Adrenal gland (tissue), 19 donors: ENCODE measurements at regions of chr2 and their contacts with region 1.

Region 1: DNA sequence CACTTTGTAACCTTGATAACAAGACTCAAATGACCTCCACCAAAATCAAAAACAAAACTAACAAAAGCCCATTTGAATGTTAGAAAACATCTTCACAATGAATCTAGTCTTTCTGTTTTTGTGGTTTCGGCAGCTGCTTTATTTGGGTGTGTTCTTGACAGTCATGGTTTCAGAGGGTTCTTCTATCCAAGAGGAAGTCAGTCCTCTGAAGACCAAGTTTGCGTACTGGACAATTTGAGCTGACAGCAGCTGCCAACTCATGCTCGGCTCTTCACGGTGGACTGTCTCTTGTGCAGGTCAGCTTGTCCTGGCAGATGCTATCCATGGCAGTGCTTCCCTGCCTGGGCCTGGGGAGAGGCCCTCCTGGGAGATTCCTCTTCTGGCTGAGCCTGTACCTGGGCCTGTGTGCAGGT is 91.0 kb downstream of the TMEM17 start:
- DNase-seq: peak in 2 of 7 donors; percentile 24 to 34
- H3K4me3 ChIP-seq: no peak overlapping the region
- H3K27ac ChIP-seq: no peak overlapping the region
- H3K4me1 ChIP-seq: peaks cover 14 to 28% of the 10 kb centered on the region in 2 donors
- H3K27me3 ChIP-seq: no peaks in the 10 kb centered on the region
- CTCF ChIP-seq: no peak
- POLR2A ChIP-seq: no peak

Region 2: DNA sequence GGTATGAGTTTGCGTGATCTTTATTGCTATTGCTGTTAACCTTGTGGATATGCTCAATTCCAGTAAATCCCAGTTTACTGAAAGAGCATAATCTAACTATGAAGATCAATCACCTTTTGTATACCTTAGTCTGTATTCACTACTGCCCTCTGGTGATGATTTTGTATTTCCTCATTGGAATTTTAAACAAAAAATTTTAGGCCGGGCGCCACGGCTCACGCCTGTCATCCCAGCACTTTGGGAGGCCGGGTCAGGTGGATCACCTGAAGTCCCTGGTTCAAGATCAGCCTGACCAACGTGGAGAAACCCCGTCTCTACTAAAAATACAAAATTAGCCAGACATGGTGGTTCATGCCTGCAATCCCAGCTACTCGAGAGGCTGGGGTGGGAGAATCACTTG is 504.4 kb before region 1 on chr2:
- intact Hi-C with region 1: loop called in 1 of 2 experiments (anchors 5 kb)
- DNase-seq: no peak
- H3K4me3 ChIP-seq: no peak overlapping the region
- H3K27ac ChIP-seq: no peak overlapping the region
- H3K4me1 ChIP-seq: peaks cover 10 to 21% of the 10 kb centered on the region in 2 donors
- H3K27me3 ChIP-seq: no peaks in the 10 kb centered on the region
- CTCF ChIP-seq: peak in 1 of 6 experiments; percentile 20
- POLR2A ChIP-seq: no peak

Region 3: DNA sequence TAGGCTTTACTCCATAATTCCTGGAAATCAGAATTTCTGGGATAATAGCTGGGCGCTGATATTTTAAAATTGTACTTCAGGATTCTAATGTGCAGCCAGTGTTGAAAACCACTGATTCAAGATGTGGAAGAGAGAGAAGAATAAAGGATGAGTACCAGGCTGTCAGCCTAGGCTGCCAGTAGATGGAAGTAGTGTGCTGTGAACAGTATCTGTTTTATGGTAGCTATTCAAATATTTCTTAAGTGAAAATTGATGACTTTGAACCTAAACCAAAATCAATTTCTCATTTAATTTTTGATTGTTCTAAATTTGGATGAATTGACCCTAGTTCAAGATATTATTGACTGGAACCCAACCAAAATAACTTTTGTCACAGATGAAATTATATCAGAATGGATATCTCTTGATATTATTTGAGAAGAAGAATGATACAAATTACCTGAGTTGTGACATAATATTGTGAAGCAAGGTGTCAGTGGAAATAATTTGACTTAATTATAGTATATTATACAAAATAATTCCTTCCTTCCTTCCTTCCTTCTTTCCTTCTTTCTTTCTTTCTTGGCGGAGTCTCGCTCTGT is 421.5 kb before region 1 on chr2:
- intact Hi-C with region 1: loop called (anchors 5 to 10 kb)
- DNase-seq: peak; percentile 26 to 66 (median 39)
- H3K4me3 ChIP-seq: no peak overlapping the region
- H3K27ac ChIP-seq: no peak overlapping the region
- H3K4me1 ChIP-seq: no peaks in the 10 kb centered on the region
- H3K27me3 ChIP-seq: no peaks in the 10 kb centered on the region
- CTCF ChIP-seq: peak; percentile 51 to 81 (median 74)
- POLR2A ChIP-seq: no peak

Region 4: DNA sequence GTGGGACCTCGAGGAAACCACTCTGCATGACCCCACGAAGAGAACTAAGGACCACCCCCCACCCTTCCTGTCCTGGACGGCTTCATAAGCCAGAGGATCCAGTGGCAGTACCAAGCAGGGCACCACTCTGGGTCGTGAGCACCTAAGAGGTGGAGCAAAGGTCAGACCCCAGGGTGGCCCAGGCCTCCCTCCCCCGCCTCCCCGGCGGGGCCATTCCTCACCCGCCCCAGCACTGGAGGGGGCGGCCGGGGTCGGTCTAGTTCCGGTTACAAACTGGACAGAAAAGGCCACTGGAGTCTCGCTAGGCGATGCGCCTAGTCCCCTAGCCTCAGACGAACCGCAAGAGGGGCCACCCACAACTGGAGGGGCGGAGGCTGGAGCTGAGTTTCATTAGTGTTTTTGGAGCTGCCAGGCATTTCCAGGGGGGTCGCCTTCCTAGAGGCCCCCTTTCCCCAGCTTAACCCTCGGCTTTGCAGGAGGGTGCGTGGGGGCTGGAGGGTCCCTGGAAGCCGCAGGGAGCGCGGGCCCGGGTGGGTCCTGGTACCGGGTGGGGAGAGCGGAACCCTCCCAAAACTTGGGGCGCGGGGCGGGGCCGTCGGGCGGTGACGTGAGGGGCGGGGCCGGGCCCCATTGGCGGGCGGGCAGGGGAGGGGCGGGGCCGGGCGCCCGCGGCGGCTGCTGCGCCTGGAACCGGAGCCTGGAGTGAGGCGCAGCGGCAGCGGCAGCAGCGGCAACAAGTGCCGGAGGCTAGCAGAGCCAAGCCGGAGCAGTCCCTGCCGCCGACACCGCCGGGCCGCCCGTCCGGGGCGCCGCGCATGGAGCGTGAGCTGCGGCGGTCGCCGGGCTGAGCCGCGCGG is 219.4 kb before region 1 on chr2 and contains the start of gene B3GNT2:
- intact Hi-C with region 1: loop called in 1 of 2 experiments (anchors 10 kb)
- DNase-seq: peak; percentile 75 to 87 (median 82)
- H3K4me3 ChIP-seq: peak within 1 kb of the TSS; percentile 88 to 99 (median 97)
- H3K27ac ChIP-seq: peak within 1 kb of the TSS; percentile 86 to 98 (median 93)
- H3K4me1 ChIP-seq: peaks cover 10 to 36% of the 10 kb centered on the region in 2 donors
- H3K27me3 ChIP-seq: no peaks in the 10 kb centered on the region
- CTCF ChIP-seq: no peak
- POLR2A ChIP-seq: peak; percentile 69 to 90
- total RNA-seq, gene B3GNT2: 13.0 to 40.0 (median 18.4) TPM